BJ (cell line): ENCODE measurements at regions of chr11 and their contacts with region 1.

Region 1: GRCh38 chr11:66835768-66836405 is 7.4 kb upstream of the RCE1 start:
- DNase-seq: no peak
- H3K4me3 ChIP-seq: no peak overlapping the region
- H3K27me3 ChIP-seq: no peaks in the 10 kb centered on the region
- CTCF ChIP-seq: no peak

Region 2: GRCh38 chr11:66694732-66695207 is 141.1 kb before region 1 on chr11:
- CTCF ChIA-PET with region 1: interaction called, 20 read pairs
- POLR2A ChIA-PET with region 1: no interaction called
- DNase-seq: peak; percentile 84
- H3K4me3 ChIP-seq: no peak overlapping the region
- H3K27me3 ChIP-seq: no peaks in the 10 kb centered on the region
- CTCF ChIP-seq: peak; percentile 98